CD8-positive, alpha-beta memory T cell (primary cell): ENCODE measurements at regions of chr12 and their contacts with region 1.

Region 1: DNA sequence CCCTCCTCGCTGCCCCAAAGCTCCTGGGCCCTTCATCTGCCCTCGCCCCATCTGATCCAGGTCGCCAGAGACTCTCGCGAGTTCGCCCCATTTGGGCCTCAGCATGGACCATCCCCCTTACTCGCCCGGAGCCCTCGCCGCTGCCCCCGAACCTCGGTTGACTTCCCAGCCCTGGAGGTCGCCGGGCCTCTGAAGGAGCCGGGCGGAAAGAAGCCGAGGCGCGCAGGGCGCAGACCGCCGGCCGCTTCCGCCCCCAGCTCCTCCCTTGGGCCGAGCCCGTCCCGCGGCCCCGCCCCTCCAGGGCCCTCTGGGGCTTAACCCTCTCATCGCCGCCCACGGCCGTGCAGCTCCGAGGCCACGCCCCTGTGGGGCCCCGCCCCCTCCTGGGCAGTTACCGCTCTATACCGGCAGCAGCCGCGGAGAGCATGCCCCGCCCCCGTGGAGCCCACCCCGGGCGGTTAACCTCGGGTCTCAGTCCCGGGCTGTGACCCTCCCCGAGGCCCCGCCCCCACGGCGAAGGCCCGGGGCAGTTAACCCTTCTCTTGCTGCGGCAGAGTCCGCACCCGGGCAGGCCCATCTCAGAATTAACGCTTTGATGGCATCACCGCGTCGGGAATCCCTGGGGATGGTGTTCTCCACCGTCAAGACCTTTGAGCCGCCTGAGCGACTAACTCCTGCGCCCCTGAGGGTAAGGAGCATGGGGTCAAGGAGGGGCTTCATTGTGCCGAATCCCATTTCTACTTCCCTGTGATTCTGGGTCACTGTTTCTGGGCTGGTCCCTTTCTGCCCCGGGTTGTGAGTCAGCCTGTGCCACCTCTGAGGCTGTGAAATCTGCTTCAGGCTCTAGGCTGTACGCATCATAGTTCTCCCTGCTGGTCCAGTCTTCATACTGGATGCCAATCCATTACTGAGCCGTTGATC is at the start of gene SPSB2:
- DNase-seq: peak; percentile 98 to 100 (median 99)
- H3K4me3 ChIP-seq: peak within 1 kb of the TSS; percentile 96
- H3K4me3 Mint-ChIP-seq: peak within 1 kb of the TSS; percentile 83 to 97 (median 89)
- H3K27ac ChIP-seq: peak within 1 kb of the TSS; percentile 90
- H3K27ac Mint-ChIP-seq: peak within 1 kb of the TSS; percentile 85 to 99 (median 92)
- H3K4me1 ChIP-seq: peaks cover 40% of the 10 kb centered on the region
- H3K4me1 Mint-ChIP-seq: peaks cover 41 to 53% (median 52%) of the 10 kb centered on the region in 3 donors
- H3K27me3 ChIP-seq: no peaks in the 10 kb centered on the region
- H3K27me3 Mint-ChIP-seq: no peaks in the 10 kb centered on the region
- total RNA-seq, gene SPSB2: 7.7 to 8.1 TPM

Region 2: GRCh38 chr12:6833189-6833890 is 40.0 kb before region 1 on chr12:
- CTCF ChIA-PET with region 1: interaction called, 14 read pairs
- POLR2A ChIA-PET with region 1: interaction called, 4 read pairs
- DNase-seq: no peak
- H3K4me3 ChIP-seq: no peak overlapping the region
- H3K4me3 Mint-ChIP-seq: no peak overlapping the region
- H3K27ac ChIP-seq: no peak overlapping the region
- H3K27ac Mint-ChIP-seq: no peak overlapping the region
- H3K4me1 ChIP-seq: peaks cover 12% of the 10 kb centered on the region
- H3K4me1 Mint-ChIP-seq: peaks cover 4 to 14% (median 8%) of the 10 kb centered on the region in 3 donors
- H3K27me3 ChIP-seq: peaks cover 3% of the 10 kb centered on the region
- H3K27me3 Mint-ChIP-seq: peaks cover 8 to 10% of the 10 kb centered on the region in 2 donors

Region 3: GRCh38 chr12:6883683-6884082 is 10.3 kb after region 1 on chr12:
- CTCF ChIA-PET with region 1: interaction called, 29 read pairs
- POLR2A ChIA-PET with region 1: no interaction called
- DNase-seq: no peak
- H3K4me3 ChIP-seq: no peak overlapping the region
- H3K4me3 Mint-ChIP-seq: no peak overlapping the region
- H3K27ac ChIP-seq: no peak overlapping the region
- H3K27ac Mint-ChIP-seq: peak overlapping the region in 1 of 8 donors; percentile 46
- H3K4me1 ChIP-seq: no peaks in the 10 kb centered on the region
- H3K4me1 Mint-ChIP-seq: no peaks in the 10 kb centered on the region
- H3K27me3 ChIP-seq: no peaks in the 10 kb centered on the region
- H3K27me3 Mint-ChIP-seq: no peaks in the 10 kb centered on the region

Region 4: GRCh38 chr12:6914246-6914946 is 41.0 kb after region 1 on chr12 and contains the start of gene ENO2:
- CTCF ChIA-PET with region 1: interaction called, 14 read pairs
- POLR2A ChIA-PET with region 1: interaction called, 9 read pairs
- DNase-seq: peak; percentile 79 to 94 (median 87)
- H3K4me3 ChIP-seq: peak within 1 kb of the TSS; percentile 69
- H3K4me3 Mint-ChIP-seq: peak within 1 kb of the TSS; percentile 89 to 99 (median 94)
- H3K27ac ChIP-seq: peak within 1 kb of the TSS; percentile 66
- H3K27ac Mint-ChIP-seq: peak within 1 kb of the TSS; percentile 94 to 99 (median 96)
- H3K4me1 ChIP-seq: peaks cover 21% of the 10 kb centered on the region
- H3K4me1 Mint-ChIP-seq: peaks cover 21 to 44% (median 30%) of the 10 kb centered on the region in 3 donors
- H3K27me3 ChIP-seq: no peaks in the 10 kb centered on the region
- H3K27me3 Mint-ChIP-seq: no peaks in the 10 kb centered on the region
- total RNA-seq, gene ENO2: 125 to 131 TPM

Region 5: GRCh38 chr12:6944381-6945186 is 71.2 kb after region 1 on chr12:
- CTCF ChIA-PET with region 1: interaction called, 34 read pairs
- POLR2A ChIA-PET with region 1: interaction called, 26 read pairs
- DNase-seq: peak; percentile 73 to 93 (median 84)
- H3K4me3 ChIP-seq: peak overlapping the region; percentile 72
- H3K4me3 Mint-ChIP-seq: peak overlapping the region; percentile 87 to 98 (median 94)
- H3K27ac ChIP-seq: peak overlapping the region; percentile 96
- H3K27ac Mint-ChIP-seq: peak overlapping the region; percentile 94 to 100 (median 99)
- H3K4me1 ChIP-seq: peaks cover 58% of the 10 kb centered on the region
- H3K4me1 Mint-ChIP-seq: peaks cover 60 to 67% (median 67%) of the 10 kb centered on the region in 3 donors
- H3K27me3 ChIP-seq: no peaks in the 10 kb centered on the region
- H3K27me3 Mint-ChIP-seq: peaks cover 0 to 5% of the 10 kb centered on the region in 2 donors